Left cardiac atrium (tissue), 4 donors: ENCODE measurements at regions of chr1 and their contacts with region 1.

Region 1: DNA sequence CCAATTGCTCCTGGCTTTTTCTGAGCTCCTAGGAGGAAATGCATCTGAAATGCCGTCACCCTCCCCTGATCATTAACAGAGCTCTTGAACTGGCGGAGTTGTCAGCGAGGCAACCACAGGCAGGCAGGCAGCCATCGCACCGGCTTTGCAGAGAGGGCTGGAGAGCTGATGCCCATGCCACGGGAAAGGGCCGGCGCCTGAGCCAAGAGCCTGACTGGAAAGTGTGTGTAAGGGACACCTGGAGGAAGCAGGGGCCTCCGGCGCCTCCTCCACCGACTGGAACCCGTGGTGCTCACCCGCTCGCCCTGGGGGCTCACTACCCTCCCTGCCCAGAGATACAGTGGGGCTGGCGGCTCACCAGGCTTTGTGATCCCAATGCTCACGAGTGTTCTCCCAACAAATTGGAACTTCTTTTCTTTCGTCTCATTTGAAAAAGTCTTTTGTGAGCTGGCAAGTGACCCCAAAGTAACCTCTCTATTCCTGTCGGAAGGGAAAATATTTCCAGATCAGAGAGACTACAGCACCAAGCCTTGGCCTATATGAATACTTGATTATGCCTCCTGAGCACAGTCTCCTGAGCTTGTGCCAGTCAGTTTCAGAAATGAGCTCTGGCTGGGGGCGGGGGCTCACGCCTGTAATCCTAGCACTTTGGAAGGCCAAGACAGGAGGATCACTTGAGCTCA is 97.7 kb upstream of the SLC25A33 start:
- DNase-seq: peak; percentile 46
- ATAC-seq: peak; percentile 24 to 38

Region 2: GRCh38 chr1:9196129-9197040 is 245.2 kb before region 1 on chr1:
- intact Hi-C with region 1: no loop called
- DNase-seq: peak; percentile 80
- ATAC-seq: peak; percentile 58 to 68

Region 3: GRCh38 chr1:9388335-9389180 is 53.0 kb before region 1 on chr1:
- intact Hi-C with region 1: loop called in 1 of 2 experiments (anchors 10 kb)
- DNase-seq: no peak
- ATAC-seq: peak in 1 of 2 donors; percentile 25

Region 4: GRCh38 chr1:9413148-9413876 is 28.3 kb before region 1 on chr1:
- intact Hi-C with region 1: loop called in 1 of 2 experiments (anchors 1 kb)
- DNase-seq: peak; percentile 64
- ATAC-seq: peak; percentile 85 to 92